Mammary epithelial cell (primary cell): ENCODE measurements at regions of chr14 and their contacts with region 1.

Region 1: GRCh38 chr14:99982537-99983250 is 82.5 kb upstream of the EVL start:
- DNase-seq: peak; percentile 42
- H3K4me3 ChIP-seq: no peak overlapping the region
- H3K27ac ChIP-seq: no peak overlapping the region
- H3K4me1 ChIP-seq: peaks cover 3% of the 10 kb centered on the region
- H3K27me3 ChIP-seq: no peaks in the 10 kb centered on the region
- CTCF ChIP-seq: peak; percentile 83 to 92

Region 2: GRCh38 chr14:100025111-100025510 is 42.4 kb after region 1 on chr14:
- CTCF ChIA-PET with region 1: no interaction called
- dilution Hi-C with region 1: no loop called
- in situ Hi-C with region 1: no loop called
- intact Hi-C with region 1: loop called (anchors 1 kb)
- DNase-seq: peak; percentile 37
- H3K4me3 ChIP-seq: no peak overlapping the region
- H3K27ac ChIP-seq: no peak overlapping the region
- H3K4me1 ChIP-seq: peaks cover 7% of the 10 kb centered on the region
- H3K27me3 ChIP-seq: no peaks in the 10 kb centered on the region
- CTCF ChIP-seq: peak; percentile 33 to 71

Region 3: GRCh38 chr14:100031536-100032281 is 49.0 kb after region 1 on chr14:
- CTCF ChIA-PET with region 1: interaction called, 3 read pairs
- dilution Hi-C with region 1: no loop called
- in situ Hi-C with region 1: no loop called
- intact Hi-C with region 1: loop called (anchors 1 kb)
- DNase-seq: peak; percentile 97
- H3K4me3 ChIP-seq: peak overlapping the region; percentile 51 to 61 (median 55)
- H3K27ac ChIP-seq: peak overlapping the region; percentile 88
- H3K4me1 ChIP-seq: peaks cover 38% of the 10 kb centered on the region
- H3K27me3 ChIP-seq: no peaks in the 10 kb centered on the region
- CTCF ChIP-seq: peak; percentile 7 to 9

Region 4: GRCh38 chr14:100056964-100057795 is 74.5 kb after region 1 on chr14:
- CTCF ChIA-PET with region 1: no interaction called
- dilution Hi-C with region 1: no loop called
- in situ Hi-C with region 1: no loop called
- intact Hi-C with region 1: loop called (anchors 2 kb)
- DNase-seq: peak; percentile 29
- H3K4me3 ChIP-seq: no peak overlapping the region
- H3K27ac ChIP-seq: peak overlapping the region; percentile 40
- H3K4me1 ChIP-seq: peaks cover 31% of the 10 kb centered on the region
- H3K27me3 ChIP-seq: no peaks in the 10 kb centered on the region
- CTCF ChIP-seq: peak in 1 of 2 donors; percentile 46

Region 5: GRCh38 chr14:100076133-100076532 is 93.4 kb after region 1 on chr14:
- CTCF ChIA-PET with region 1: interaction called, 6 read pairs
- dilution Hi-C with region 1: no loop called
- in situ Hi-C with region 1: no loop called
- intact Hi-C with region 1: loop called (anchors 1 kb)
- DNase-seq: peak; percentile 56
- H3K4me3 ChIP-seq: no peak overlapping the region
- H3K27ac ChIP-seq: no peak overlapping the region
- H3K4me1 ChIP-seq: peaks cover 28% of the 10 kb centered on the region
- H3K27me3 ChIP-seq: no peaks in the 10 kb centered on the region
- CTCF ChIP-seq: peak; percentile 42 to 43

Region 6: GRCh38 chr14:100117633-100118395 is 135.1 kb after region 1 on chr14:
- CTCF ChIA-PET with region 1: interaction called, 3 read pairs
- dilution Hi-C with region 1: loop called (anchors 5 kb)
- in situ Hi-C with region 1: loop called in 1 of 2 experiments (anchors 10 kb)
- intact Hi-C with region 1: no loop called
- DNase-seq: no peak
- H3K4me3 ChIP-seq: no peak overlapping the region
- H3K27ac ChIP-seq: no peak overlapping the region
- H3K4me1 ChIP-seq: peaks cover 3% of the 10 kb centered on the region
- H3K27me3 ChIP-seq: no peaks in the 10 kb centered on the region
- CTCF ChIP-seq: no peak

Region 7: DNA sequence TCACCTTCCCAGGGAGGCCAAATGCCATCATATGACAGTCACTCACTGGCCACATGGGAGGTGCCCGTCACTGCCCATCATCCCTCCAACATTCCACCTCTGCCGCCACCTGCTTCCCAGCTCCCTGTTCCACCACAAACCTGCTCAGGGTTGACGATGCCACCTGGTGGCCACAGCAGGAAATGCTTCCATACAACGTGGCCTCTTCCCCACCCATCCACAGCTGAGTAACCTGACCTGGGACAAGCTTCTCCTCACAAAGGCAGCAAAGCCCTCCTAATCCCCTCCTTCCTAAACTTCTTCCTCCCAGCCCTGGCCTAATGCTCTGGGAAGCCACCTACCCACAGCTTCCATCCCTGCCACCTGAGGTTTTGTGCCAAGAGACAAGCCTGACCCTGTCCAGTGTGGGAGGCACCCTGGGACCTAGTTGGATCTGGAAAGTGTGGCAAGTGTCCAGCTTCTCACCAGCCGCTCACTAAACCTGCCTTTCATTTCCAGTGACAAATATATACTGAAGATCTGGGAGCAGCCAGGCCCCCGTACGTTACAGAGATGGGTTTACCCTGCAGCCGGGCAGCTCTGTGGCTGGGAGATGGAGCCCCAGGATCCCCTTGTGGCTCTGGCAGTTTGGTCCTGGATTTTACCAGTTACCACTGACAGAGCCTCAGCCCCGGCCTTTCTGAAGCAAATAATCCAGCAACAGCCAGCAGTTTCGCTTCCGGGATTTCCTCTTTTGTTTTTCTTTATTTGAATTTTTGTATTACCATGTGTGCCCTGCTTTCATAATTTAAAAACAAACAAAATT is 172.6 kb after region 1 on chr14:
- CTCF ChIA-PET with region 1: no interaction called
- dilution Hi-C with region 1: no loop called
- in situ Hi-C with region 1: no loop called
- intact Hi-C with region 1: loop called (anchors 1 kb)
- DNase-seq: no peak
- H3K4me3 ChIP-seq: no peak overlapping the region
- H3K27ac ChIP-seq: no peak overlapping the region
- H3K4me1 ChIP-seq: peaks cover 19% of the 10 kb centered on the region
- H3K27me3 ChIP-seq: peaks cover 5% of the 10 kb centered on the region
- CTCF ChIP-seq: peak; percentile 70 to 77